AG04449 (cell line): ENCODE measurements at regions of chr3 and their contacts with region 1.

Region 1: DNA sequence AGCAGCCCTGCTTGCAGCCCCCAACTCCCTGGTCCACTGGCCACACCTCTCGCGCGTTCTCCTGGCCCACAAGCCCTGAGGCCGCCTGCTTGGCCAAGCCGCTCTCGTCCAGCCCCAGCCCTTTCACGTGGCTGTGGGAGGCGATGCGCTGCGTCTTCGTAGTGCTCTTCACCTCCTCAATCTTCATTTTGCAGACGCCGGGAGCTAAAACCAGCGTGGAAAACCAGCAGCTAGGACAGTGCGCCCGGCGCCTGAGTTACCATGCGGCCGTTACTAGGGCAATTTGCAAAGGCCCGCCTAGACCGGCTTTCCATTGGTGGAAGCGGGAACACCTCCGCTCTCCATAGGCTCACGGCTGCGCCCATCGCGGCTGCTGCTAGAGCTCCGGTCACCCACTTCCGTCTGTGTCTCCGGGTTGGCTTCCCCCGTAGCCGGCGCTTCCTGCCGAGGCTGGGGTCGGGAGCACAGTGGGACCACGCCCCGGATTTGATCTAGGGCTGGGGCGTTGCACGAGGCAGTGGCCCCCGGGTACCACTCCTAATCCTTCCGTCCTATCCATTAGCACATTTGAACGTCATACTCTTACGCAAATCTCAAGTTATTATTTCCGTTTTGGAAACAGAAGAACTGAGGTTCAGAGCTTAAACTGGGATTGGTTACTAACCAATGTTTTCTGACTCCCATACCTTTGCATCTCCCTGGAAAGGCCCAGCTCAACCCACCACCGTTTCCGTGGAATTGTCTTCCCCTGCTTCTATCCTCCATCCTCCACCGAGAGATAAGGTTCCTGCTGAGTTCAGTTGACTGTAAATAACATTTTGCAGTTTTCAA is at the start of gene RUVBL1:
- DNase-seq: peak; percentile 77
- H3K4me3 ChIP-seq: peak within 1 kb of the TSS; percentile 97
- CTCF ChIP-seq: no peak

Region 2: GRCh38 chr3:127699416-127700300 is 424.1 kb before region 1 on chr3:
- CTCF ChIA-PET with region 1: no interaction called
- POLR2A ChIA-PET with region 1: no interaction called
- DNase-seq: no peak
- H3K4me3 ChIP-seq: no peak overlapping the region
- CTCF ChIP-seq: no peak

Region 3: GRCh38 chr3:127959846-127960245 is 163.9 kb before region 1 on chr3:
- CTCF ChIA-PET with region 1: no interaction called
- POLR2A ChIA-PET with region 1: no interaction called
- DNase-seq: no peak
- H3K4me3 ChIP-seq: no peak overlapping the region
- CTCF ChIP-seq: no peak

Region 4: DNA sequence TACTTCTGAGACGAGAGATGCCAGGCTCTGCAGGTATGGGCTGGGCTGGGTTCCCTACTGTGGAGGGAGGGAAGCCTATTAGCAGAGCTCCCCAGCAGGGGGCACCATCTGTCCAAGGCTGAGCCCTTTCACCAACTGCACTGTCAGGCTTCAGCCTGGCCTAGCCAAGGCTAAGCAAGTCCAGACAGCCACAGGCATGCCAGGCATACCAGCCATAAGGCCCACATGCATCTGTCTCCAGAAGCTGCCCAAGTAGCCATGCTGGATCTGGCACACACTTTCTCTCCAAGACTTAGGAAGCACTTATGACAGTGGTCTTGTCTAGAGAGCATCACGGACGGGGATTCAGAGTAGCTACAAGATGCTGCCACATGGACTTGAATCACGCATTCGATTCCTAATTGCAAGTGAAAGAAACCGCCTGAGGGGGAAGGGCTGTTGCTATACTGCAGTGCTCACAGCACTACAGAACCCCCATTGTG is 28.5 kb before region 1 on chr3:
- CTCF ChIA-PET with region 1: interaction called, 246 read pairs
- POLR2A ChIA-PET with region 1: no interaction called
- DNase-seq: peak; percentile 82
- H3K4me3 ChIP-seq: no peak overlapping the region
- CTCF ChIP-seq: peak; percentile 90

Region 5: GRCh38 chr3:128112357-128112968 is 11.3 kb before region 1 on chr3:
- CTCF ChIA-PET with region 1: interaction called, 19 read pairs
- POLR2A ChIA-PET with region 1: interaction called, 3 read pairs
- DNase-seq: peak; percentile 58
- H3K4me3 ChIP-seq: no peak overlapping the region
- CTCF ChIP-seq: no peak

Region 6: DNA sequence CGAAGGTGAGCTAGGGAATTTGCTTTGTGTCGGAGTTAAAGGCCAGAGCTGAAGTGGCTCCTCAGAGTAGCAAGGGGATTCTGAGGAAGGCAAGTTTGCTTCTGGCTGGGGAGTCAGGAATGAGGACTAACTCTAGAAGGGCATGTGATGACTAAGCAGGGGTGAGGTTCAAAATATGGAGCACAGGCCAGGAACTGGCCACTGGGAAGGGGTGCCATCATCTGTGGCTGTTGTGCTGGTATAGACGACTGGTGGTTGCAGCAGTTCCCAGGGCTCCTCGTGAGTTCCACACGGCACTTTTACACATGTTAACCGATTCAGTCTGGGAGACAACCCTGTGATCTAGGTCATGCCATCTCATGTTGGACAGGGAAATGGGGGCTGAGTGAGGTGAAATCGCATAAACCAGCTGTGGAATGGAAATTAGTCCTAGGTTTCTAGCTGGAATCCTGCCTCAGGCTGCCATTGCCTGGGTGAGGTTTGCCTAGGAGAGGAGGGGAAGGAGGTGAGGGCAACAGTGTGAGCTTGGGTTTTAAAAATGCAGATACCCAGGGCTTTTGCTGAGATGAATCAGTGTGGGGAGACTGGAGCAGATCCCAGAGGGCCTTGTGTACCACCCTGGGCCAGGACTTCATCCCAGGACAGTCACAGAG is 130.5 kb after region 1 on chr3:
- CTCF ChIA-PET with region 1: no interaction called
- POLR2A ChIA-PET with region 1: no interaction called
- DNase-seq: no peak
- H3K4me3 ChIP-seq: no peak overlapping the region
- CTCF ChIP-seq: no peak